ENCODE measurements at regions of chr4 and their contacts with region 1.

Region 1: GRCh38 chr4:77465271-77465670 is 140.3 kb upstream of the CXCL13 start:
- DNase-seq: no peak
- H3K4me3 ChIP-seq: no peak overlapping the region
- CTCF ChIP-seq: peak; percentile 42

Region 2: GRCh38 chr4:77437079-77437478 is 28.2 kb before region 1 on chr4:
- CTCF ChIA-PET with region 1: no interaction called
- POLR2A ChIA-PET with region 1: no interaction called
- DNase-seq: no peak
- H3K4me3 ChIP-seq: no peak overlapping the region
- CTCF ChIP-seq: no peak

Region 3: GRCh38 chr4:77697860-77698590 is 232.8 kb after region 1 on chr4:
- CTCF ChIA-PET with region 1: interaction called, 10 read pairs
- POLR2A ChIA-PET with region 1: no interaction called
- DNase-seq: peak; percentile 24
- H3K4me3 ChIP-seq: no peak overlapping the region; the same call in 1 of the 2 replicates
- CTCF ChIP-seq: peak; percentile 56

Measured in AG04449 (cell line).